ENCODE measurements at regions of chr5 and their contacts with region 1.

Region 1: GRCh38 chr5:181207214-181208107 is 2.5 kb upstream of the TRIM7 start:
- DNase-seq: peak; percentile 66 to 88 (median 79)
- H3K4me3 ChIP-seq: peak overlapping the region; percentile 43 to 80 (median 69)
- H3K27ac ChIP-seq: peak overlapping the region in 56 of 59 donors; percentile 9 to 90 (median 77)
- H3K27me3 ChIP-seq: no peaks in the 10 kb centered on the region
- CTCF ChIP-seq: peak in 2 of 56 donors; percentile 5 to 6

Region 2: DNA sequence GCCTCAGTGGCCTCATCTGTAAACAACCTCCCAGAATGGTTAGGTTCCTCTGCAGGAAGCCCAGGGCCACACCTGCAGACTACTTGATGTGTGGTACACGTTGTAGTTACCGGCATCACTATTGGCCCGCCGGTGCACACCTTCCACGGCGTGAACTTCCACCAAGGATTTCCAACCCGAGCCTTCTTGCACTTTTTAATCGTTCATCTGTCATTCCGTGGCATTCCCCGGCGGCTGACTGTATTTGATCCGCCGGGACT is 10.3 kb after region 1 on chr5:
- intact Hi-C with region 1: loop called (anchors 1 kb)
- DNase-seq: peak in 2 of 10 donors; percentile 30 to 39
- H3K4me3 ChIP-seq: peak overlapping the region; percentile 36 to 77 (median 63)
- H3K27ac ChIP-seq: peak overlapping the region in 58 of 59 donors; percentile 1 to 91 (median 74)
- H3K27me3 ChIP-seq: no peaks in the 10 kb centered on the region
- CTCF ChIP-seq: peak in 2 of 56 donors; percentile 1 to 4